ENCODE measurements at regions of chr13 and their contacts with region 1.

Region 1: DNA sequence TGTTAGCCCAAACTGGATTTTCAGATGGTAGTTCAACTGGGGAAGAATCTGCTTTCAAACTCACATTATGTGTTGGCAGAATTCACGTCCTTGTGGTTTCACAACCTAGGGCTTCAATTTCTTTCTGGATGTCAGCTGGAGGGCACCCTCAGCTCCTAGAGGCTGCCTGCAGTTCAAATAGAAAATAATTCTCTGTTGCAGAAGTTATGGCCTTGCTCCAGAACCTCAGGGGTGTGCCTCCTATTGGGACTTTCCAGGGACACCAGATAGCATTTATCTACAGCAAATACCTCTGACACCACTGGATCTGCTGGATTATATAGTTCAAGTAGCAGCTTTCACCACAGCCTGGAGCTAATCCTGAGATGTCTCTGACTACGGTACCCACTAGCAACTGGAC is 11.8 kb upstream of the RB1 start:
- DNase-seq: no peak
- ATAC-seq: no peak
- H3K4me3 ChIP-seq: no peak overlapping the region
- H3K27ac ChIP-seq: no peak overlapping the region
- H3K4me1 ChIP-seq: peaks cover 5% of the 10 kb centered on the region
- H3K27me3 ChIP-seq: peaks cover 1 to 18% of the 10 kb centered on the region in 2 experiments; a peak in 3 of 4 replicates
- CTCF ChIP-seq: no peak
- EP300 ChIP-seq: no peak
- POLR2A ChIP-seq: no peak
- RAD21 ChIP-seq: no peak

Region 2: DNA sequence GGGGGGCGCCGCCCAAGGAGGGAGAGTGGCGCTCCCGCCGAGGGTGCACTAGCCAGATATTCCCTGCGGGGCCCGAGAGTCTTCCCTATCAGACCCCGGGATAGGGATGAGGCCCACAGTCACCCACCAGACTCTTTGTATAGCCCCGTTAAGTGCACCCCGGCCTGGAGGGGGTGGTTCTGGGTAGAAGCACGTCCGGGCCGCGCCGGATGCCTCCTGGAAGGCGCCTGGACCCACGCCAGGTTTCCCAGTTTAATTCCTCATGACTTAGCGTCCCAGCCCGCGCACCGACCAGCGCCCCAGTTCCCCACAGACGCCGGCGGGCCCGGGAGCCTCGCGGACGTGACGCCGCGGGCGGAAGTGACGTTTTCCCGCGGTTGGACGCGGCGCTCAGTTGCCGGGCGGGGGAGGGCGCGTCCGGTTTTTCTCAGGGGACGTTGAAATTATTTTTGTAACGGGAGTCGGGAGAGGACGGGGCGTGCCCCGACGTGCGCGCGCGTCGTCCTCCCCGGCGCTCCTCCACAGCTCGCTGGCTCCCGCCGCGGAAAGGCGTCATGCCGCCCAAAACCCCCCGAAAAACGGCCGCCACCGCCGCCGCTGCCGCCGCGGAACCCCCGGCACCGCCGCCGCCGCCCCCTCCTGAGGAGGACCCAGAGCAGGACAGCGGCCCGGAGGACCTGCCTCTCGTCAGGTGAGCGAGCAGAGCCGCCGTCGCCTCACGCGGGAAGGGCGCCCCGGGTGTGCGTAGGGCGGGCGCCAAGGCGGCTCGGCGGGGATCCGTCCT is 11.8 kb after region 1 on chr13 and contains the start of gene RB1:
- CTCF ChIA-PET with region 1: interaction called, 7 read pairs
- POLR2A ChIA-PET with region 1: interaction called, 5 read pairs
- RAD21 ChIA-PET with region 1: interaction called, 3 read pairs
- SMC1A ChIA-PET with region 1: interaction called, 15 read pairs
- in situ Hi-C with region 1: no loop called
- intact Hi-C with region 1: loop called (anchors 1 kb)
- DNase-seq: peak; percentile 51
- ATAC-seq: peak; percentile 73
- H3K4me3 ChIP-seq: peak within 1 kb of the TSS; percentile 87
- H3K27ac ChIP-seq: peak within 1 kb of the TSS; percentile 88
- H3K4me1 ChIP-seq: peaks cover 8% of the 10 kb centered on the region; the same call in 1 of the 2 replicates
- H3K27me3 ChIP-seq: no peaks in the 10 kb centered on the region
- CTCF ChIP-seq: 0 out of 6 replicates have a peak, but pooled peaks of 1 of the 3 experiments have one; percentile 5
- EP300 ChIP-seq: no peak
- POLR2A ChIP-seq: peak; percentile 91
- RAD21 ChIP-seq: no peak
- polyA plus RNA-seq, gene RB1: 2.8 to 3.6 TPM

Region 3: DNA sequence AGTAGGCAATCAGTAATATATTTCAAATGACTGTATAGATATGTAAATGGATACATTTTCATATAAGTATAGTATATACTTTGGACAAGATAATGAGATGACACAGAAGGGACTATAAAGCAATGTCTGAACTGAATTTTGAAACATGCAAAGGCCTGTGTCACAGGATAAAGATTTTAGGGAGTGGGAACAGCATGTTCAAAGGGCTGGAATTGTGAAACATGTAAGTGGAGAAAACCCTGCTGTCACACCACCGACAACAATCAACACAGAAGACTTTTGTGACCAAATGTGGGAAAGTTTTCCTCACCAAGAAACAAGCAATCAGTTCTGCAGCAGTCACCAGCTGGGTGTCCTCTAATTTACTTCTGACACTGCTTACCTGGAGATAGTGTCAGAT is 78.3 kb after region 1 on chr13:
- CTCF ChIA-PET with region 1: no interaction called
- POLR2A ChIA-PET with region 1: no interaction called
- RAD21 ChIA-PET with region 1: no interaction called
- SMC1A ChIA-PET with region 1: no interaction called
- in situ Hi-C with region 1: no loop called
- intact Hi-C with region 1: no loop called
- DNase-seq: no peak
- ATAC-seq: no peak
- H3K4me3 ChIP-seq: no peak overlapping the region
- H3K27ac ChIP-seq: no peak overlapping the region
- H3K4me1 ChIP-seq: no peaks in the 10 kb centered on the region
- H3K27me3 ChIP-seq: no peaks in the 10 kb centered on the region
- CTCF ChIP-seq: no peak
- EP300 ChIP-seq: no peak
- POLR2A ChIP-seq: no peak
- RAD21 ChIP-seq: no peak